SK-N-SH (cell line): ENCODE measurements at regions of chr15 and their contacts with region 1.

Region 1: GRCh38 chr15:64067564-64068030 is 21.3 kb upstream of the DAPK2 start:
- DNase-seq: peak; percentile 90
- H3K4me3 ChIP-seq: no peak overlapping the region; a peak in 1 of 4 replicates
- H3K27ac ChIP-seq: no peak overlapping the region
- H3K4me1 ChIP-seq: peaks cover 0 to 14% of the 10 kb centered on the region in 2 experiments; a peak in 2 of 4 replicates
- H3K27me3 ChIP-seq: no peaks in the 10 kb centered on the region
- CTCF ChIP-seq: peak; percentile 76
- EP300 ChIP-seq: peak in 1 of 2 experiments; percentile 63; a peak in 2 of 4 replicates
- RAD21 ChIP-seq: peak; percentile 95

Region 2: DNA sequence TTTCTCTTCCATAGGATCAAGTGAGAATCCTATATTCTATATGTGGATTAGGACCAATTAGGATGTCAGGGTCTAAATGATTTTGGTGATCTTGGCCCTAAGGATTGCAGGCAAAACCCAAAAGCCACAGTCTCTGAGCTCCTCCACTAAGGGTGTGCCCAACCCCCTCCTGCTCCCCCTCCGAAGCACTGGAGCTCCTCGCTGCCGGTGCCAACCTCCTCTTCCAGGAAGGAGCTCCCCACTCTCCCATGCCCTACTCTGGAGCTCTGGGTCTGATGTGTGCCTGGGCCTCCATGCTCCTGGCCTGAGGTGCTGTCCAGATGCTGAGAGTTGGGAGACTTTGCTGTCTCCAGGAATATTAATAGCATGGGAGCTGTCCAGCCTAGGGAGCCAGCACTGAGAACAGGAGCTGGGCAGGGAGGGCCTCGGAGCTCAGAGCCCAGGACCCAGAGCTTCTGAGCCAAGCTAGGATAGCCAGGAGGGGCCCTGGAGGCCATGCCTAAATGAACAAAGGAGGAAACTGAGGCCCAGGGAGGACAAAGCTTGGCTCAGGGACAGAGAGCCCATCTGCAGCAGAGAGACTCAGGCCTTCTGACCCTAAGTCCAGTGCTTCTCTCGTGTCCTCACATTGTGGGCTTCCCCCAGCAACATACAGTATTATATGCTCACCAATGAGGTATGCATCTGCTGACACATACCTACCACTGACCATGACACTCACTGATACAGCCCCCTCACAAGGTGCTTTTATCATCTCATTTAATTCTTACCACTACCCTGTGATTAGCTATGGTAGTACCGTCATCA is 197.0 kb before region 1 on chr15:
- CTCF ChIA-PET with region 1: no interaction called
- POLR2A ChIA-PET with region 1: no interaction called
- DNase-seq: no peak
- H3K4me3 ChIP-seq: no peak overlapping the region
- H3K27ac ChIP-seq: no peak overlapping the region
- H3K4me1 ChIP-seq: no peaks in the 10 kb centered on the region
- H3K27me3 ChIP-seq: no peaks in the 10 kb centered on the region
- CTCF ChIP-seq: no peak
- EP300 ChIP-seq: no peak
- RAD21 ChIP-seq: no peak

Region 3: DNA sequence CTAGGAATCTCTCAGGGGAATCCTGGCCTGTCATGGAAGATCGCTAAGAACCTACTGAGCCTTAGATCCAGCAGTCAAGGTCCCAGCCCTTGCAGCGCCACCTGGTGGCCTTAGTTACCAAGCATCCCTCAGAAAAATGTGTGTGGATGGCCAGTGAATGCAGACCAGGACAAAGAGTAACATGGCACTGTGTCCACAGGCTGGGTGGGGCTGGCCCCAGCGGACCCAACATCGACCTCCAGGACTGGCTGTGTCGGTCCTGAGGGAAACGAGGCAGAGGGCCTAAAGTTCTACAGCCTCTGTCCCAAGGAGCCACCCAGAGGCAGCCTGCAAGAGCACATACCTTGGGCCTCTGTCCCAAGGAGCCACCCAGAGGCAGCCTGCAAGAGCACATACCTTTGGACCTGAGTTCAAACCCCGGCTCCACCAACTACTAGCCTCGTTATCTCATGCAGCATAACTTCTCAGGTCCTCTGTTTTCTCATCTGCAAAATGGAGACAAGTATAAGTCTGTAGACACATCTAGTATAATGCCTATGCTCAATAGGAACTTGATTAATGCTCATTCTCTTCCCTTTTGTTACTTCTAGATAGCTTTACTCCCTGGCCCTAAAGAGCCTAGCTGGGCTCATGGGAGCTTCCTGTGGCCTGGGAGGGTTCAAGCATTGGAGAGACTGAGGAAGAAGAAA is 176.4 kb before region 1 on chr15:
- CTCF ChIA-PET with region 1: interaction called, 13 read pairs
- POLR2A ChIA-PET with region 1: no interaction called
- DNase-seq: peak; percentile 80
- H3K4me3 ChIP-seq: no peak overlapping the region; a peak in 1 of 4 replicates
- H3K27ac ChIP-seq: no peak overlapping the region
- H3K4me1 ChIP-seq: no peaks in the 10 kb centered on the region; a peak in 1 of 4 replicates
- H3K27me3 ChIP-seq: no peaks in the 10 kb centered on the region
- CTCF ChIP-seq: peak; percentile 90
- EP300 ChIP-seq: no peak
- RAD21 ChIP-seq: peak; percentile 80

Region 4: GRCh38 chr15:64046347-64047153 is 21.0 kb before region 1 on chr15 and contains the start of gene DAPK2:
- CTCF ChIA-PET with region 1: interaction called, 15 read pairs
- POLR2A ChIA-PET with region 1: no interaction called
- DNase-seq: peak; percentile 97
- H3K4me3 ChIP-seq: peak within 1 kb of the TSS; percentile 61 to 64
- H3K27ac ChIP-seq: no peak within 1 kb of the TSS; a peak in 1 of 4 replicates
- H3K4me1 ChIP-seq: peaks cover 0 to 13% of the 10 kb centered on the region in 2 experiments; a peak in 1 of 4 replicates
- H3K27me3 ChIP-seq: no peaks in the 10 kb centered on the region
- CTCF ChIP-seq: peak; percentile 77
- EP300 ChIP-seq: no peak
- RAD21 ChIP-seq: peak; percentile 50
- polyA plus RNA-seq, gene DAPK2: 1.2 and 1.4 TPM in 2 replicates